AG04449 (cell line): ENCODE measurements at regions of chr20 and their contacts with region 1.

Region 1: GRCh38 chr20:32959351-32960221 is 44.6 kb downstream of the SUN5 start:
- DNase-seq: no peak
- H3K4me3 ChIP-seq: no peak overlapping the region
- CTCF ChIP-seq: no peak

Region 2: GRCh38 chr20:32664678-32665159 is 294.9 kb before region 1 on chr20:
- CTCF ChIA-PET with region 1: no interaction called
- POLR2A ChIA-PET with region 1: no interaction called
- DNase-seq: no peak
- H3K4me3 ChIP-seq: no peak overlapping the region
- CTCF ChIP-seq: no peak

Region 3: GRCh38 chr20:32945710-32946221 is 13.8 kb before region 1 on chr20:
- CTCF ChIA-PET with region 1: interaction called, 10 read pairs
- POLR2A ChIA-PET with region 1: no interaction called
- DNase-seq: peak; percentile 3
- H3K4me3 ChIP-seq: no peak overlapping the region
- CTCF ChIP-seq: peak; percentile 37

Region 4: DNA sequence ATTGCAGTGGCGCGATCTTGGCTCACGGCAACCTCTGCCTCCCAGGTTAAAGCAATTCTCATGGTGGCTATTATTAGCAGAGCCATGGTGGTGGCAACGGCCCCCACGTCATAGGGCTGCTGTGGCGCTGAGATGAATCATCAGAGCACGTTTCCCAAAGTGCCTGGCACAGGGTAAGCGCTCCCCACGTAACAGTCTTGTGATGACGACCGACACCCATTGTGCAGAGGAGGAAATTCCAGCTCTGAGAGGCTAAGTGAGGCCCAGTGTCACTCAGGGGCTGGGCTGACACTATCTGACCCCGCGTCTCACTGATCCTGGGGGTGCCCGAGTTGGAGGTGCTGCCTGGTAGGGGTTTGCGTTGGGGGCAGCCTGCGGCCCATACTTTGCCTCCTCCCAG is 28.4 kb after region 1 on chr20:
- CTCF ChIA-PET with region 1: no interaction called
- POLR2A ChIA-PET with region 1: no interaction called
- DNase-seq: no peak
- H3K4me3 ChIP-seq: no peak overlapping the region
- CTCF ChIP-seq: no peak